Spleen (tissue), 13 donors: ENCODE measurements at regions of chr7 and their contacts with region 1.

Region 1: GRCh38 chr7:82359426-82359825 is 84.2 kb downstream of the CACNA2D1 start:
- DNase-seq: no peak
- H3K4me3 ChIP-seq: no peak overlapping the region
- H3K27ac ChIP-seq: no peak overlapping the region
- H3K4me1 ChIP-seq: no peaks in the 10 kb centered on the region
- H3K27me3 ChIP-seq: no peaks in the 10 kb centered on the region
- CTCF ChIP-seq: no peak
- POLR2A ChIP-seq: no peak

Region 2: GRCh38 chr7:82194016-82194643 is 165.3 kb before region 1 on chr7:
- intact Hi-C with region 1: no loop called
- DNase-seq: no peak
- H3K4me3 ChIP-seq: no peak overlapping the region
- H3K27ac ChIP-seq: no peak overlapping the region
- H3K4me1 ChIP-seq: no peaks in the 10 kb centered on the region
- H3K27me3 ChIP-seq: no peaks in the 10 kb centered on the region
- CTCF ChIP-seq: no peak
- POLR2A ChIP-seq: no peak

Region 3: DNA sequence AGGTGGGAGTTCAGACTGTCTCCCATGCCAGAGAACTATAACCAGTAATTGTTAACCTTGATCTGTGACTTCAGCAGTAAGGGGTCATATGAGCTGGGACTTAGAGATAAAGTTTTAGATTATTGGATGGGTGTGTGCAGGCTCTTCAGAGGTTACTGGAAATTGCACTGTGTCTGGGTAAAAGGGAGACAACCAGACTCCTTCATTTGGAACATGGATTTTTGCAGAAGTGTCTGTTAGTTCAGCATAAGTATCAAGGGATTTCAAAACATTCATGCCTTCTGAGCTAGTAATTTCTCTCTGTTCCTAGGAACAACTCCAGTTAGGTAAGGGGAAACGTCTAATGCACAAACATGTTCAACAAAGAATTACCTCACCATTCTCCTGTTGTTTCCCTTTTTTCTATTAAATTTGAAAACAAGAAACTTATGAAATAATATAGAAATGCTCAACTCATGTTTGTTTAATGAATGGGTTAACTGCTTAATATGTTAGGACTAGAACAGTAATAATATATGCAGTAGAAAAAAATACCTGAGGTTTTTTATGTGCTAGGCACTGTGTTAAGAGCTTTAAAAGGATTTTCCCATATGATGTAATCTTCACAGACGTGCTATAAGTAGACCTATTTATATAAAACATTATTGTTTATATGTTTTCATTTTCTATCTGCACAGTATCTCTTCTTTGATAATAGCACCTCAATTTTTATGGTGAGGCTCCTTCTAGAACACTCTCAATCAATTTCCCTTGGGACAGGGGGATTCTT is 148.8 kb before region 1 on chr7:
- intact Hi-C with region 1: no loop called
- DNase-seq: no peak
- H3K4me3 ChIP-seq: no peak overlapping the region
- H3K27ac ChIP-seq: no peak overlapping the region
- H3K4me1 ChIP-seq: no peaks in the 10 kb centered on the region
- H3K27me3 ChIP-seq: no peaks in the 10 kb centered on the region
- CTCF ChIP-seq: no peak
- POLR2A ChIP-seq: no peak

Region 4: GRCh38 chr7:82410461-82410860 is 51.0 kb after region 1 on chr7:
- intact Hi-C with region 1: loop called (anchors 10 kb)
- DNase-seq: peak; percentile 17
- H3K4me3 ChIP-seq: no peak overlapping the region
- H3K27ac ChIP-seq: no peak overlapping the region
- H3K4me1 ChIP-seq: no peaks in the 10 kb centered on the region
- H3K27me3 ChIP-seq: no peaks in the 10 kb centered on the region
- CTCF ChIP-seq: no peak
- POLR2A ChIP-seq: no peak

Region 5: GRCh38 chr7:82468435-82468834 is 109.0 kb after region 1 on chr7:
- intact Hi-C with region 1: no loop called
- DNase-seq: no peak
- H3K4me3 ChIP-seq: no peak overlapping the region
- H3K27ac ChIP-seq: no peak overlapping the region
- H3K4me1 ChIP-seq: no peaks in the 10 kb centered on the region
- H3K27me3 ChIP-seq: no peaks in the 10 kb centered on the region
- CTCF ChIP-seq: no peak
- POLR2A ChIP-seq: no peak